ENCODE measurements at regions of chr4 and their contacts with region 1.

Region 1: GRCh38 chr4:183504064-183504929 is 561 bp upstream of the ING2 start:
- DNase-seq: peak; percentile 99
- ATAC-seq: peak; percentile 78
- H3K4me3 ChIP-seq: peak overlapping the region; percentile 72 to 99 (median 85)
- H3K4me3 Mint-ChIP-seq: peak overlapping the region; percentile 98
- H3K27ac ChIP-seq: peak overlapping the region; percentile 74 to 97
- H3K27ac Mint-ChIP-seq: peak overlapping the region; percentile 100
- H3K4me1 ChIP-seq: peaks cover 7 to 10% of the 10 kb centered on the region in 2 donors
- H3K4me1 Mint-ChIP-seq: peaks cover 14% of the 10 kb centered on the region
- H3K27me3 ChIP-seq: no peaks in the 10 kb centered on the region
- H3K27me3 Mint-ChIP-seq: no peaks in the 10 kb centered on the region
- CTCF ChIP-seq: no peak

Region 2: DNA sequence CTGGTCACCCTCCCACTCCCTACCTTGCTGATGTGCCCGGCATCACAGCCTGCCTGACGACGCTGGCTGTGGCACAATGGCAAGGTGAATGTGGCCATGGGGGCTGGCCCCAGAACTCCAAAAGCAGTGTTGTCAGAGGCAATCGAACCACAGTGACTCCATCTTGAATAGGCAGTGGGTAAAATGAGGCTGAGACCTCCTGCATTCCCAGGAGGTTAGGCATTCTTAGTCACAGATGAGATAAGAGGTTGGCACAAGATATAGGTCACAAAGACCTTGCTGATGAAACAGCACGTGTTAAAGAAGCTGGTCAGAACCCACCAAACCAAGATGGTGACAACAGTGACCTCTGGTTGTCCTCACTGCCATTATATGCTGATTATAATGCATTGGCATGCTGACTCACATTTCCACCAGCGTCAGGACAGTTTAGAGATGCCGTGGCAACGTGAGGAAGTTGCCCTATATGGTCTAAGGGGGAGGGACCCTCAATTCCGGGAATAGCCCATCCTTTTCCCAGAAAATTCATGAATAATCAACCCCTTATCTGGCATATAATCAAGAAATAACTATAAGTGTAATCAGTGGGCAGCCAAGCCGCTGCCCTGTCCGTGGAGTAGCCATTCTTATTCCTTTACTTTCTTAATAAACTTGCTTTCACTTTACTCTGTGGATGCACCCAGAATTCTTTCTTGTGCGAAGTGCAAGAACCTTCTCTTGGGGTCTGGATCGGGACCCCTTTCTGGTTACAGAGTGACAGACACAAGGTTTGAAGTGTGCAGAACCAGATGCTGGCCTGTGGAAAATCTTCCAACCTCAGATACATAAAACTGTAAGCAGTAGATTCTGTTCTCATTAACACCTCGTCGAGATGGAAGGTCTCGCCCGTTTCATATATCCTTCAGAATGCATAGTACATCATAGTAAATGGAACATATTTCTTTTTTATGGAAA is 155.3 kb before region 1 on chr4:
- CTCF ChIA-PET with region 1: no interaction called
- POLR2A ChIA-PET with region 1: no interaction called
- intact Hi-C with region 1: no loop called
- DNase-seq: no peak
- ATAC-seq: no peak
- H3K4me3 ChIP-seq: no peak overlapping the region
- H3K4me3 Mint-ChIP-seq: no peak overlapping the region
- H3K27ac ChIP-seq: no peak overlapping the region
- H3K27ac Mint-ChIP-seq: no peak overlapping the region
- H3K4me1 ChIP-seq: no peaks in the 10 kb centered on the region
- H3K4me1 Mint-ChIP-seq: peaks cover under 1% of the 10 kb centered on the region
- H3K27me3 ChIP-seq: peaks cover 0 to 11% (median 0%) of the 10 kb centered on the region in 4 experiments
- H3K27me3 Mint-ChIP-seq: peaks cover 29% of the 10 kb centered on the region
- CTCF ChIP-seq: no peak

Region 3: DNA sequence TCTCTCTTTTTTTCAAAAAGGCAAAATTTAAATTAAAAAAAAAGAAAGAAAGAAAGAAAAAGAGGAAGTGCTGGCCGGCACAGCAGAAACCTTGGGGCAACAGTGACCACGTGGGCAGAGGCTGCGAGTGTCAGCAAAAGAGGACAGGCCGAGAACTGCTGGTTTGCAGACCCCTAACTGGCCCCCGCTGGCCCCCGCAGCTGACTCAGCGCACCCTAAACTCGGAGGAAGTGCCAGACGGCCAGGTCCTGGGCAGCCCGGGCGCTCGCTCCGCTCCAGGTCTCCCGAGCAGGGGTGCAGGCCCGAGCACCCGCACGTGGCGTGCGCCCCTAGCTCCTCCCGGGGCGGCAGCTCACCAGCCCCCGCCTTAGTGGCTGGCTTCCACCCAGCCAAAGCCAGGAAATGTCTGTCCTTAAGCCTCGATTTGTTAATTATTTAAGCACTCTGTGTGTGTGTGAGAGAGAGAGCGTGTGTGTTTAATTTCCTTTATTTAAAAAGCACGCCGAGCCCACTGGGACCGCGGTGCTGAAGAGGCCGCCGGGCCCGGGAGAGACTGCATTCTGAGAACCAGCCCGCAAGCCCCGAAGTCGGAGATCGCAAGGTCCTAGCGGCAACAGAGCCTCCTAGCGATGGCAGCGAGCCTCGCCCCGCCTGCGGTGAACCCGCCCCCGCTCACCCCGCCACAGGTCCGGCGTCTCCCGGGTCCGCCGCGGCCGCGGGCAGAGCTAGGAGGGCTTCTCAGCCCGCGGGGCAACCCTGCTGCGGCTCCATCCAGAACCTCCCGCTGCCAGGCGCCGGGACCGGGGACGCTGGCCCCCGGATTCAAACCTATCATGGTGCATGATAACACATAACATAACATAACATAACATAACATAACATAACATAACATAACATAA is 105.8 kb before region 1 on chr4:
- CTCF ChIA-PET with region 1: no interaction called
- POLR2A ChIA-PET with region 1: no interaction called
- intact Hi-C with region 1: loop called (anchors 2 kb)
- DNase-seq: peak; percentile 74
- ATAC-seq: peak; percentile 84
- H3K4me3 ChIP-seq: peak overlapping the region; percentile 32 to 76 (median 65)
- H3K4me3 Mint-ChIP-seq: peak overlapping the region; percentile 87
- H3K27ac ChIP-seq: peak overlapping the region in 1 of 2 donors; percentile 56
- H3K27ac Mint-ChIP-seq: peak overlapping the region; percentile 50
- H3K4me1 ChIP-seq: peaks cover 12 to 23% of the 10 kb centered on the region in 2 donors
- H3K4me1 Mint-ChIP-seq: peaks cover 24% of the 10 kb centered on the region
- H3K27me3 ChIP-seq: peaks cover 0 to 9% (median 2%) of the 10 kb centered on the region in 4 experiments
- H3K27me3 Mint-ChIP-seq: peaks cover 13% of the 10 kb centered on the region
- CTCF ChIP-seq: no peak

Region 4: GRCh38 chr4:183471946-183472708 is 32.2 kb before region 1 on chr4:
- CTCF ChIA-PET with region 1: interaction called, 4 read pairs
- POLR2A ChIA-PET with region 1: no interaction called
- intact Hi-C with region 1: loop called (anchors 1 kb)
- DNase-seq: peak; percentile 77
- ATAC-seq: peak; percentile 53
- H3K4me3 ChIP-seq: no peak overlapping the region
- H3K4me3 Mint-ChIP-seq: no peak overlapping the region
- H3K27ac ChIP-seq: no peak overlapping the region
- H3K27ac Mint-ChIP-seq: no peak overlapping the region
- H3K4me1 ChIP-seq: no peaks in the 10 kb centered on the region
- H3K4me1 Mint-ChIP-seq: peaks cover 5% of the 10 kb centered on the region
- H3K27me3 ChIP-seq: no peaks in the 10 kb centered on the region
- H3K27me3 Mint-ChIP-seq: no peaks in the 10 kb centered on the region
- CTCF ChIP-seq: peak; percentile 97

Region 5: DNA sequence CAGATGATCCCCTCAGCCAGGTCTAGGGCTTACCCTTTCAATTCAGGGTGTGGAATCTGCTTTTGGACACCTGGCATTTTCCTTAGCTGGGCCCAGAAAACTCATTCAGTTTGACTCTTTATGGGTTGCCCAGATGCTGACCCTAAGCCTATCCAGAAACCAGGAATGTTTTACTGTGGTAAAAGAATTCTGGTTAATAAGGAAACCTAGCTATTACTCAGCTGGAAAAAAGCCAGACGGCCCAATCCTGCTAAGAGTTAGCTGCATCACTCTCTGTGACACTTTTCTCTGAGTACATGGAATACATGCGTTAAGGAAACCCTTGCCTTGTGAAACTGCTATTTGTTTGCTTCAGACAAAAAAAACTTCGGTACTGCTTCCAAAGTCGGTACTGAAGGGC is 28.5 kb after region 1 on chr4:
- CTCF ChIA-PET with region 1: no interaction called
- POLR2A ChIA-PET with region 1: no interaction called
- intact Hi-C with region 1: no loop called
- DNase-seq: no peak
- ATAC-seq: no peak
- H3K4me3 ChIP-seq: no peak overlapping the region
- H3K4me3 Mint-ChIP-seq: no peak overlapping the region
- H3K27ac ChIP-seq: no peak overlapping the region
- H3K27ac Mint-ChIP-seq: no peak overlapping the region
- H3K4me1 ChIP-seq: no peaks in the 10 kb centered on the region
- H3K4me1 Mint-ChIP-seq: no peaks in the 10 kb centered on the region
- H3K27me3 ChIP-seq: peaks cover 0 to 13% (median 1%) of the 10 kb centered on the region in 4 experiments
- H3K27me3 Mint-ChIP-seq: peaks cover 19% of the 10 kb centered on the region
- CTCF ChIP-seq: no peak

Region 6: GRCh38 chr4:184417802-184418511 is 913.7 kb after region 1 on chr4:
- CTCF ChIA-PET with region 1: no interaction called
- POLR2A ChIA-PET with region 1: no interaction called
- intact Hi-C with region 1: loop called (anchors 10 kb)
- DNase-seq: peak; percentile 16
- ATAC-seq: peak; percentile 43
- H3K4me3 ChIP-seq: peak overlapping the region in 2 of 5 experiments; percentile 12 to 55
- H3K4me3 Mint-ChIP-seq: peak overlapping the region; percentile 48
- H3K27ac ChIP-seq: peak overlapping the region; percentile 79 to 84
- H3K27ac Mint-ChIP-seq: peak overlapping the region; percentile 91
- H3K4me1 ChIP-seq: peaks cover 45 to 57% of the 10 kb centered on the region in 2 donors
- H3K4me1 Mint-ChIP-seq: peaks cover 78% of the 10 kb centered on the region
- H3K27me3 ChIP-seq: no peaks in the 10 kb centered on the region
- H3K27me3 Mint-ChIP-seq: no peaks in the 10 kb centered on the region
- CTCF ChIP-seq: no peak

Region 7: GRCh38 chr4:185142912-185143595 is 1638.8 kb after region 1 on chr4 and contains the start of gene SLC25A4:
- CTCF ChIA-PET with region 1: no interaction called
- POLR2A ChIA-PET with region 1: no interaction called
- intact Hi-C with region 1: loop called (anchors 5 kb)
- DNase-seq: peak; percentile 94
- ATAC-seq: peak; percentile 98
- H3K4me3 ChIP-seq: peak within 1 kb of the TSS; percentile 55 to 83 (median 81)
- H3K4me3 Mint-ChIP-seq: peak within 1 kb of the TSS; percentile 97
- H3K27ac ChIP-seq: peak within 1 kb of the TSS; percentile 66 to 76
- H3K27ac Mint-ChIP-seq: peak within 1 kb of the TSS; percentile 90
- H3K4me1 ChIP-seq: peaks cover 13% of the 10 kb centered on the region in 2 donors
- H3K4me1 Mint-ChIP-seq: peaks cover 15% of the 10 kb centered on the region
- H3K27me3 ChIP-seq: peaks cover 0 to 4% (median 0%) of the 10 kb centered on the region in 4 experiments
- H3K27me3 Mint-ChIP-seq: peaks cover 8% of the 10 kb centered on the region
- CTCF ChIP-seq: peak; percentile 76
- total RNA-seq, gene SLC25A4: 7.3 and 8.2 TPM in 2 replicates

Region 8: DNA sequence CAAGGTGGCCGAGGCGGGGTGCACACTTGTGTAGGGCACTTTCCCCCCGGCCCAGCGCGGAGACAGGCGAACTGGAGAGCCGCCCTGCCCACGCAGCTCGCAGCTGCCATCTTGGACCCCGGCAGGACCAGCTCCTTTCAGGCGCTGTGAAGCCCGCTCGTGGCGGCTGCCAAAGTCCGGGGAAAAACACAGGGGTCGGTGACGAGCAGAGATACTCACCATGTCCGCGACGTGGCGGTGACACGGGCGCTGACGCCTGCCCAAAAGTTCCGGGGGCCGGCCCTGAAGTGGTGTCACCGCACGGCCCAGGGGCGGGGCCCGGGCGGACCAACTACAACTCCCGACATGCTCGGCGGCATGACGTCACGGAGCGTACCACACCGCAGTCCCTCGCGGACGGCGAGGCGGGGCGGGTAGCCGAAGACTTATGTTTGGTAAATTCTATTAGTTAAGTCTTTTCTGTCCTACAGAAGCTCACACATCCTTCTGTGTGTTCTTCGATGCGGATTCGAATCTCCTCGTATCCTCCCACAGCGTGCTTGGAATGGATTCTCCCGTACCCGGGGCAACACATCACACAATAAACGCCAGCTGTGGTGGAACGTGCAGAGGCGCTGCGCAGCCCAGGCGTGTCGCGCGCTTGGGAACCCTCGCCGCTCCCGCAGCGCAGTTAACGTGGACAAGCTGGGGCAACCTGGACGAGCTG is 1921.5 kb after region 1 on chr4 and contains the start of gene UFSP2:
- CTCF ChIA-PET with region 1: no interaction called
- POLR2A ChIA-PET with region 1: no interaction called
- intact Hi-C with region 1: loop called (anchors 10 kb)
- DNase-seq: peak; percentile 98
- ATAC-seq: peak; percentile 88
- H3K4me3 ChIP-seq: peak within 1 kb of the TSS; percentile 78 to 99 (median 88)
- H3K4me3 Mint-ChIP-seq: peak within 1 kb of the TSS; percentile 86
- H3K27ac ChIP-seq: peak within 1 kb of the TSS; percentile 98 to 100
- H3K27ac Mint-ChIP-seq: peak within 1 kb of the TSS; percentile 99
- H3K4me1 ChIP-seq: peaks cover 13% of the 10 kb centered on the region in 2 donors
- H3K4me1 Mint-ChIP-seq: peaks cover 15% of the 10 kb centered on the region
- H3K27me3 ChIP-seq: no peaks in the 10 kb centered on the region
- H3K27me3 Mint-ChIP-seq: peaks cover 4% of the 10 kb centered on the region
- CTCF ChIP-seq: no peak
- total RNA-seq, gene UFSP2: 20.6 and 24.4 TPM in 2 replicates